Activated naive CD4-positive, alpha-beta T cell treated with anti-CD3 and anti-CD28 coated beads for 36 hours (primary cell): ENCODE measurements at regions of chr4 and their contacts with region 1.

Region 1: DNA sequence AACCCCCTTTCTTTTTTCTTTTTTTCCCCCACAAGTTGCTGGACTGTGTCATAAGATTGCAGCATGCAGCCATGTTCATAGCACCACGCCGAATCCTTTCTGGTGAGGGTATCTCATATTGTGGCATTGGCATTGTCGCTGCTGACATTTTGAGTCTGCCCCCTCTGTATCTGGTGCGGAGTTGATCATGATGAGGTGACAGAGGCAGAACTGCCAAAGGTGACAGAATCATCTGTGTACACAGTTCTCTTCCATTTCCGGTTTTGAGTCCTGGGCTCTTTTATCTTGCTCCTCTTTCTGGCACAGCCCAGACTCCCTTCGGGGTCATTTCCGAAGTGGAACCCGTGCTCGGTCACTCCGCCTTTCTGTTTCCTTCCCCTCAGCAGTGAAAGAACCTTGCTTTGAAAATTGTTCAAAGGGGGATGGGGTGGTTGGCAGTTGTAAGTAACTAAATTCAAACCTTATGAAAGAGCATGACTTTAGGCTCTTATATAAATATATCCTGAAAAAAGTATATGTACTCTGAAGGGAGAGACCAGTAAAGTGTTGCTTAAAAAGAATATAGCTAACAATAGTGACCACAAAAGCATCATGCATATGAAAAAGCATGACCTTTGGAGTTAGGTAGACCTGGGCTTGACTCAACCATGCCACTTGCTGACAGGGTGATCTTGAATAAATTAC is 55.0 kb upstream of the BMP2K start:
- DNase-seq: peak; percentile 67
- H3K4me3 Mint-ChIP-seq: no peak overlapping the region
- H3K27ac Mint-ChIP-seq: no peak overlapping the region
- H3K4me1 Mint-ChIP-seq: peaks cover 19% of the 10 kb centered on the region
- H3K27me3 Mint-ChIP-seq: no peaks in the 10 kb centered on the region

Region 2: GRCh38 chr4:78661921-78662521 is 59.1 kb before region 1 on chr4:
- CTCF ChIA-PET with region 1: no interaction called
- intact Hi-C with region 1: loop called (anchors 1 kb)
- DNase-seq: peak; percentile 40
- H3K4me3 Mint-ChIP-seq: no peak overlapping the region
- H3K27ac Mint-ChIP-seq: no peak overlapping the region
- H3K4me1 Mint-ChIP-seq: peaks cover 57% of the 10 kb centered on the region
- H3K27me3 Mint-ChIP-seq: no peaks in the 10 kb centered on the region

Region 3: DNA sequence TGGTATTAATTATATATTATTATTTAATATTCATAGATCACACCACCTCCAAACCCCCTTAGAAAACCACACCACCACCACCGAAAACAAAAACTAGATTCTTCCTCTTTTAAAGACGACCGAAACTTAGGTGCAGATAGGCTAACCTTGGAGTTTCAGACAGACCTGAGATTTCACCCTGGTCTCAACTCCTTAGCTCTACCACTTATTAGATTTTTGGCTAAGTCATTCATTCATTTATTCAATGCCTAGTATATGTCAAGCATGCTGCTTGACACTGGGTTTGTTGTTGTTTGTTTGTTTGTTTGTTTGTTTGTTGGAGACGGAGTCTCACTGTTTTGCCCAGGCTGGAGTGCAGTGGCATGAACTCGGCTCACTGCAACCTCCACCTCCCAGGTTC is 45.5 kb after region 1 on chr4:
- CTCF ChIA-PET with region 1: no interaction called
- intact Hi-C with region 1: no loop called
- DNase-seq: no peak
- H3K4me3 Mint-ChIP-seq: no peak overlapping the region
- H3K27ac Mint-ChIP-seq: no peak overlapping the region
- H3K4me1 Mint-ChIP-seq: peaks cover 16% of the 10 kb centered on the region
- H3K27me3 Mint-ChIP-seq: no peaks in the 10 kb centered on the region